ENCODE measurements at regions of chr2 and their contacts with region 1.

Region 1: GRCh38 chr2:171086352-171087290 is 74.1 kb downstream of the TLK1 start:
- DNase-seq: peak; percentile 65
- ATAC-seq: peak; percentile 84
- H3K4me3 Mint-ChIP-seq: peak overlapping the region; percentile 63
- H3K27ac Mint-ChIP-seq: peak overlapping the region; percentile 62
- H3K4me1 Mint-ChIP-seq: peaks cover 40% of the 10 kb centered on the region
- H3K27me3 Mint-ChIP-seq: no peaks in the 10 kb centered on the region

Region 2: DNA sequence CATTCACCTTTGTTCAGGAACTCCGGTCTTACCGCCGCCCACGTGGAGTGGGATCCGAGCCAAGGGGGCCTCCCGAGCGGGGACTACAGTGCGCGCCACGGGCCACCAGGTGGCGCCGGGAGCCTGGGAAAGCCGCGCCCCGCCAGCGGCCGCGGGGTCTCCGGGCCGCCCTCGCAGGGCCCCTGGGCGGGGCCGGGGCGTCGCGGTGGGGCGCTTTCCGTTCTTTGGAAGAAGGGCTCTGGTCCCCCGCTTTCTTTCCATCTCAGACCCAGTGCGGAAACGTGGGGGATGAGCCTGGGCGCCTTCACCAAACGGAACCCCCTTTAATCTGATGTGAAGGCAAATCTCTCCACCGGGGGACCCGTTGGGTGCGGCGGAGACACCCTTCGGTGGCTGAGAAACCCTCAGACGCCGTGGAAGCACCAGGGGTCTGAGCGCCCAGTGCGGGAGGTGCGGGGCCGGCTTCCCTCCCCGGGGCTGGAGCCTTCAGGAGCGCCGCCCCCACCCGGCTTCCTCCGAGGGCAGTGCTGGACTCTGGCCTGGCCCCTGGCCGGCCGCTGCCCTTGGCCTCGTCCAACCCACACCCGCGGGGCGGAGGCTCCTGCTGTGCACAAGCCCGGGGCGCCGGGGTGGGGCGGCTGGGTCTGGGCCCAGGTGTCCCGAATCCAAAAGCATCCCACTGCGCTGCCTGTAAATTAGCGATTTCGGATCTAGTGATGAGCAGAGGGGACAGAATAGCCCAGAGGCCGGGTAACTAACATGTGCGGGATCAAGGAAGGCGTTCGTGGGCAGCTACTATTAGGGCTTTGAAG is 112.9 kb before region 1 on chr2:
- CTCF ChIA-PET with region 1: interaction called, 59 read pairs
- POLR2A ChIA-PET with region 1: no interaction called
- DNase-seq: peak; percentile 85
- ATAC-seq: peak; percentile 97
- H3K4me3 Mint-ChIP-seq: peak overlapping the region; percentile 76
- H3K27ac Mint-ChIP-seq: peak overlapping the region; percentile 79
- H3K4me1 Mint-ChIP-seq: peaks cover 14% of the 10 kb centered on the region
- H3K27me3 Mint-ChIP-seq: peaks cover 2% of the 10 kb centered on the region

Region 3: GRCh38 chr2:171109571-171109970 is 22.9 kb after region 1 on chr2:
- CTCF ChIA-PET with region 1: interaction called, 18 read pairs
- POLR2A ChIA-PET with region 1: no interaction called
- DNase-seq: no peak
- ATAC-seq: no peak
- H3K4me3 Mint-ChIP-seq: no peak overlapping the region
- H3K27ac Mint-ChIP-seq: no peak overlapping the region
- H3K4me1 Mint-ChIP-seq: peaks cover 4% of the 10 kb centered on the region
- H3K27me3 Mint-ChIP-seq: no peaks in the 10 kb centered on the region

Region 4: DNA sequence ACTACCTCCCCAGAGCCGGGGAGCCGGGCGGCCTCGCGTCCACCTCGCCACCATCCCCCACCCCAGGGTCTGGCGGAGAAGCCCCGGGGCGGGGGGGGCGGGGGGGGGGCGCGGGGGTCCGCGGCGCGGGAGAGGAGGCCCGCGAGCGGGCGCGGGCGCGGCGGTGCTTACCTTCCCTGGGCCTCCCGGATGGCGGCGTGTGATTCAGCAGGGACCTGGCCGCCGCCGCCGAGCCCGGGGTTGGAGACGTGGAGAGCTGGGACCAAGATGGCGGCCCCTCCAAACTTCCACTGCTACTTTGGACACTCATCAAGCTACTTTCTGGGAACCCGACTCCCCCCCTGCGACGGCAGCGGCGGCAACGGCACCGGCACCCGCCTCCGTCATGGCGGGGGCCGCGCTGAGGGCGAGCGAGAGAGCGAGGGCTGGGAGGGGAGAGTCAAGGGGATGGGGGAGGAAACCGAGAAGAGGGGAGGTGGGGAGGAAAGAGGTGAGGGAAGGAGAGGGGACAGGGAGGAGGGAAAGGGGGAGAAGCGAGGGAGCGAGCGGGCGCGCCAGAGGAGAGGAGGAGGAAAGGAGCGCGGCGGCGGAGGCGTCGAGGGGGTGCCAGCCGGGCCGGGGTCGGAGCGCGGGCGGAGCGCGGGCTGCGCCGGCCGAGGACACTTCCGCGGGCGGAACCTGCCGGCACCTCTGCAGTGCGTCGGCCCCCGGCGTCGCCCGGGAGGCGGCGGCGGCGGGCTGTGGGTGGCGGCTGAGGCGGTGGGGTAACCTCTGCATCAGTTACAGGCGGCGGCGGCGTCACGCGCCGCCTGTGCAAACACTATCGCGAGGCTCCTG is 73.7 kb after region 1 on chr2 and contains the start of gene TLK1:
- CTCF ChIA-PET with region 1: interaction called, 42 read pairs
- POLR2A ChIA-PET with region 1: no interaction called
- DNase-seq: peak; percentile 79
- ATAC-seq: peak; percentile 69
- H3K4me3 Mint-ChIP-seq: peak within 1 kb of the TSS; percentile 99
- H3K27ac Mint-ChIP-seq: peak within 1 kb of the TSS; percentile 96
- H3K4me1 Mint-ChIP-seq: peaks cover 57% of the 10 kb centered on the region
- H3K27me3 Mint-ChIP-seq: no peaks in the 10 kb centered on the region
- total RNA-seq, gene TLK1: 89.1 to 96.3 TPM

Measured in activated CD8-positive, alpha-beta T cell treated with anti-CD3 and anti-CD28 coated beads, Interleukin-2, amount 10 ng/mL, durations not matched to agents 7 days and 5 days (primary cell).